Psoas muscle (tissue), 8 donors: ENCODE measurements at regions of chr6 and their contacts with region 1.

Region 1: GRCh38 chr6:104357928-104358327 is 501.8 kb downstream of the HACE1 start:
- DNase-seq: no peak
- ATAC-seq: no peak
- H3K4me3 ChIP-seq: no peak overlapping the region
- H3K27ac ChIP-seq: no peak overlapping the region
- H3K4me1 ChIP-seq: no peaks in the 10 kb centered on the region
- H3K27me3 ChIP-seq: no peaks in the 10 kb centered on the region
- CTCF ChIP-seq: no peak

Region 2: GRCh38 chr6:104031346-104031745 is 326.6 kb before region 1 on chr6:
- intact Hi-C with region 1: loop called in 1 of 2 experiments (anchors 5 kb)
- DNase-seq: no peak
- ATAC-seq: no peak
- H3K4me3 ChIP-seq: no peak overlapping the region
- H3K27ac ChIP-seq: no peak overlapping the region
- H3K4me1 ChIP-seq: no peaks in the 10 kb centered on the region
- H3K27me3 ChIP-seq: no peaks in the 10 kb centered on the region
- CTCF ChIP-seq: no peak

Region 3: GRCh38 chr6:104256646-104257045 is 101.3 kb before region 1 on chr6:
- intact Hi-C with region 1: no loop called
- DNase-seq: no peak
- ATAC-seq: no peak
- H3K4me3 ChIP-seq: no peak overlapping the region
- H3K27ac ChIP-seq: no peak overlapping the region
- H3K4me1 ChIP-seq: no peaks in the 10 kb centered on the region
- H3K27me3 ChIP-seq: no peaks in the 10 kb centered on the region
- CTCF ChIP-seq: no peak

Region 4: DNA sequence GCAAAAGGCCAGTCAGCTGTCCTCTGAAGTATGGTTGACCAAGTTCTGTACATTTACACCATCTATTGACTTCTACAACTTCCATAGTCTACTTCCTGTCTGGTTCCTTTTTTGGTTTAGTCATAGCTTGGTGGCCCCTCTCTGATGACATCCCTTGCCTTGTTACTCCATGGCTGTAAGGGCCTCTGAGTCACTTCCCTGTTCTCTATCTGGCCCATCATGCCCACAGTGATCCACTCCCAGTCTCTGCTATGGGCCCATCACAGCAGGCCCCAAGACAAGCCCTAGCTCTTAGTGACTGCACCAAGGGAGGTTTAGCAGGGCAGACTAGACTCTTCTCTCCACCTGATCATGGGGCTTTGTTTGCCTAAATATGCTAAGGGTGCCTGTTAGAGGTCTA is 60.2 kb after region 1 on chr6:
- intact Hi-C with region 1: no loop called
- DNase-seq: no peak
- ATAC-seq: no peak
- H3K4me3 ChIP-seq: no peak overlapping the region
- H3K27ac ChIP-seq: no peak overlapping the region
- H3K4me1 ChIP-seq: no peaks in the 10 kb centered on the region
- H3K27me3 ChIP-seq: no peaks in the 10 kb centered on the region
- CTCF ChIP-seq: no peak

Region 5: DNA sequence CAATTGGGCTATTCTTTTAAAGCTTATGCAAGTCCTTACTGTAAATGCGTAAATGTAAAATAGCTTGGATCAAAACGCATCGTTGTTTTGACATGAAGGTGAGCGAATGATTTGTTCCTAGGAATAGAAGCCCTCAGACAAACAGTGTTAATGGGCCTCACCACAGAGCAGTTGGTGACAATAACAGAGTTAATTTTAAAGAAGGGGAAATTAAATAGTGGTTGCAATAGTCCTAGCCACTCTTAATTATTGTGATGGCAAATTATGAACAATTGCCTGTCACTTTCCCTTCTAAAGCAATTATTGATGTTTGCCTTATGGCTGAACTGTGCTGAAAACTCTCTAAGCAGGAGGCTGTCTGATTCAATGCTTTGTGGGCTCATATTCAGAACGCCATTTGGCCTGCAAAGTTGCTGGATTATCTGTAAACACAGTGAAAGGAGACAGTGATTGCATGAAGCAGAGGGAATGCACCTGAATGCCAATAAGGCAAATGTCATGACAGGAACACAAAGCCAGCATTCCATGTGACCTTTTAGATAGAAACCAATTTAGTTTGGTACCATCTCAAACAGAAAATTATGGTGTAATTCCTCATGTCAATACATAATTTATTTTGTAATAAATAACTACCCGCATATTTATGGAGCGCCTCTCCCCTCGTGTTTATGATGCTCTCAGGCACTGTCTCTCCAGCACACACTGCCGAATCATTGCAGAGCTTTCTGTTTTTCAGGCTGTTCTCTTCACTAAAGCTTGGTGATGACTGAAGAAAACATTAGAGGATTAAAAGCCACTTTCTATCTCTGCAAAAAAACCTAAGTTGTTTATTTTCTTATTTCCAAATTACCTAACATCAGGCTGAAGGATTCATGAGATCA is 114.3 kb after region 1 on chr6:
- intact Hi-C with region 1: no loop called
- DNase-seq: no peak
- ATAC-seq: no peak
- H3K4me3 ChIP-seq: no peak overlapping the region
- H3K27ac ChIP-seq: no peak overlapping the region
- H3K4me1 ChIP-seq: no peaks in the 10 kb centered on the region
- H3K27me3 ChIP-seq: no peaks in the 10 kb centered on the region
- CTCF ChIP-seq: no peak